ENCODE measurements at regions of chr17 and their contacts with region 1.

Region 1: GRCh38 chr17:37358830-37359681 is 16.7 kb upstream of the C17orf78 start:
- DNase-seq: peak; percentile 96
- H3K4me3 ChIP-seq: peak overlapping the region; percentile 63 to 93 (median 76)
- H3K27ac ChIP-seq: peak overlapping the region; percentile 92 to 97 (median 94)
- H3K4me1 ChIP-seq: peaks cover 0 to 25% (median 22%) of the 10 kb centered on the region in 4 donors
- H3K27me3 ChIP-seq: no peaks in the 10 kb centered on the region
- CTCF ChIP-seq: peak in 1 of 4 experiments; percentile 46
- EP300 ChIP-seq: no peak
- POLR2A ChIP-seq: peak; percentile 16 to 20

Region 2: GRCh38 chr17:37322826-37323561 is 36.1 kb before region 1 on chr17:
- intact Hi-C with region 1: no loop called
- DNase-seq: no peak
- H3K4me3 ChIP-seq: no peak overlapping the region
- H3K27ac ChIP-seq: no peak overlapping the region
- H3K4me1 ChIP-seq: no peaks in the 10 kb centered on the region
- H3K27me3 ChIP-seq: no peaks in the 10 kb centered on the region
- CTCF ChIP-seq: no peak
- EP300 ChIP-seq: no peak
- POLR2A ChIP-seq: no peak

Region 3: DNA sequence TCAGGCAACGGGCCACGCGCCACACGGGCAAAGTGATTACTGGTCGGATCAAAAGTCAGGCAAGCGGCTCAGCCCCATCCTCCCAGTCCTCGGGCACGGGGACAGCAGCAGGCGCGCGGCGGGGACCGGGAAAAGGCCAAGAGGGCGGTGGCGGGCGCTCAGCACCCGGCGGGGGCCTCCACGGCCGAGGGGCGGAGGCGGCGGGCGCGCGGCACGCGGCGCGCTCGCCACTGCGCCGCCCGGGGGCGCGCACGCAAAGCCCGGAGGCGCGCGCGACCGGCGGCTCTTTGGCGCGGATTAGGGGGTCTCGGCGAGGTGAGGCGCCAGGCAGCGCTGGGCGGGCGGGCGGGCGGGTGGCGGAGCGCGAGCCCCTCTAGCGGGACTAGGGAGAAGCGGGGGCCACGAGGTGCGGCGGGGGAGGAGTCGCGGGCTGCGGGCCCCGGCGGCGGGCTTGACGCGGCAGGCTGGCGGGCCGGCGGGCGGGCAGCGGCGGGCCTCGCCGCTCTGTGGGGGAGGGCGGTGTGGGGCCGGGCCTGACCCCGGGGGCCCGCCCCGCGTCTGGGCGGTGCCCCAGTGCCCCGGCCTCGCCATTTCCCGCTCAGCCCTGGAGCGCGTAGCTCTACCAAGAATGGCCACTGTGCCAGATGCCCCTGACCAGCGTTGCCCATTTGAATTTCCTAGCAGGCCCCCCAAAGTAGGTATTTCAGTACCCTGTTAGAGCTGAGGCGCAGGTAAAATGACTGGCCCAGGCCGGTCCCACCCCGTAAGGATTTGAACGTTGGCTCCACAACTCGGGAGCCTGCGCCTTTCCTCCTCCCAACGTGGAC is 47.8 kb after region 1 on chr17 and contains the starts of genes ACACA and TADA2A:
- intact Hi-C with region 1: loop called (anchors 2 kb)
- DNase-seq: peak; percentile 88
- H3K4me3 ChIP-seq: peak within 1 kb of the TSS; percentile 80 to 87 (median 84)
- H3K27ac ChIP-seq: peak within 1 kb of the TSS; percentile 92 to 94 (median 94)
- H3K4me1 ChIP-seq: peaks cover 0 to 34% (median 23%) of the 10 kb centered on the region in 4 donors
- H3K27me3 ChIP-seq: no peaks in the 10 kb centered on the region
- CTCF ChIP-seq: peak in 2 of 4 experiments; percentile 9 to 15
- EP300 ChIP-seq: no peak
- POLR2A ChIP-seq: peak; percentile 46 to 52
- total RNA-seq, gene ACACA: 21.1 to 38.9 (median 28.9) TPM
- total RNA-seq, gene TADA2A: 15.0 to 22.7 (median 20.3) TPM

Region 4: GRCh38 chr17:37476431-37477120 is 117.5 kb after region 1 on chr17:
- intact Hi-C with region 1: no loop called
- DNase-seq: no peak
- H3K4me3 ChIP-seq: no peak overlapping the region
- H3K27ac ChIP-seq: peak overlapping the region in 1 of 4 donors; percentile 16
- H3K4me1 ChIP-seq: peaks cover 0 to 9% (median 0%) of the 10 kb centered on the region in 4 donors
- H3K27me3 ChIP-seq: no peaks in the 10 kb centered on the region
- CTCF ChIP-seq: no peak
- EP300 ChIP-seq: no peak
- POLR2A ChIP-seq: no peak

Measured in sigmoid colon (tissue), 7 donors.